Endothelial cell of umbilical vein (primary cell): ENCODE measurements at regions of chr7 and their contacts with region 1.

Region 1: GRCh38 chr7:135274495-135275268 is 41.0 kb downstream of the STRA8 start:
- DNase-seq: peak; percentile 81
- H3K4me3 ChIP-seq: no peak overlapping the region
- H3K27ac ChIP-seq: no peak overlapping the region
- H3K4me1 ChIP-seq: no peaks in the 10 kb centered on the region
- H3K27me3 ChIP-seq: peaks cover 0 to 2% of the 10 kb centered on the region in 2 experiments
- CTCF ChIP-seq: peak; percentile 69 to 73
- POLR2A ChIP-seq: no peak

Region 2: DNA sequence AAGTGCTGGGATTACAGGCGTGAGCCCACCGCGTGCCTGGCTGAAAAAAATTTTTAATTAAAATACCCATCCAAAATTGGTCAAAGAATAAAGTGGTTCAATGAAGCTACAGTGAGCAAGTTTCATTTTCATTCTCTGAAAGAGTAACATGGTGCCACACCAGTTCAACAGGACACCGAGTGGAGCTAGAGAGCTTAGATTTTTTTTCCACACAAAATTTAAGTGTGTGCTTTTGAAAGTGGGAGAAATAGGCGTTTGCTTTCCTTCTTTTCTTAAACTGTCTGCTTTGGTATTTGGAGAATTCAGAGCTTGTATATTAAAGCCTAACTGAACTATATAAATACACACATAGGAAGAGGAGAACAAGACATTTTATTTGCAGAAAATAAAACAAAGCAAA is 584.7 kb before region 1 on chr7:
- CTCF ChIA-PET with region 1: interaction called, 14 read pairs
- POLR2A ChIA-PET with region 1: no interaction called
- dilution Hi-C with region 1: no loop called
- intact Hi-C with region 1: no loop called
- DNase-seq: peak; percentile 56
- H3K4me3 ChIP-seq: no peak overlapping the region
- H3K27ac ChIP-seq: no peak overlapping the region
- H3K4me1 ChIP-seq: no peaks in the 10 kb centered on the region
- H3K27me3 ChIP-seq: peaks cover 0 to 3% of the 10 kb centered on the region in 2 experiments
- CTCF ChIP-seq: peak in 1 of 2 donors; percentile 39
- POLR2A ChIP-seq: no peak

Region 3: DNA sequence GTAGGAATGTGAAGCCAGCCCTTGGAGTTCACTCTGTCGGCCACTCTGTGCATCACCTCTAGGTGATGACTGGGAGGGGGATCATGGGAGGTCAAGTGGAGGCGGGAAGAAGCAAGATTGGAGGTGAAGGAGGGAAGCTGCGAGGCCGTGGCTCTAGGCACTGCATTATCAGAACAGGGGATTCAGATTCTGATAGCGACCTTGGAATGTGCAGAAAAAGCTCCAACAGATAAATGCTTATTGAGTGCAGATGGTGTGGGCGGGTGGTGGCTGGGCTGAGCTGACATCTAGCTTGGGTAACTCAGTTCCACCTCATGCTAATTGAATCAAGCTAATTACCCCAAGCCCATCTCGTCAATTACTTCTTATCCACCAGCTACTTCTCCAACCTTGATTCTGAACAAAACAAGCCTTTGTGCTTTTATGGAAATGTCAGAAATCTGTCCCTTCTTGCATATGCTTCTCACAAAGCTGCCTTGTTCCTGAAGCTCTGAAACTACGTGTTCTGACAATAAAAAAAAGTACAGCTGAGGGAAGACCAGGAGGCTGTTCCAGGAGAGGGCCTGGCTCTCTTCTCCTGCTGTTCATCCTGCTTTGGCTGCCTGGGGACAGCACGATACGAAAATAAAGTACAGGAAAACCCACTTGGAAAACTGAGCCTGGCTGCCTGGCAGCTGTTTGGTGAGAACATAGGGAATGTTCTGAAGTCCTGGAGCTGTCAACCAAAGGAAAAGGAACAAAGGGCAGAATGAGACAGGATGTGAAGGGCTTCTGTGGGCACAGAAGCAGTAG is 13.6 kb before region 1 on chr7:
- CTCF ChIA-PET with region 1: interaction called, 31 read pairs
- POLR2A ChIA-PET with region 1: no interaction called
- dilution Hi-C with region 1: no loop called
- intact Hi-C with region 1: no loop called
- DNase-seq: peak; percentile 36
- H3K4me3 ChIP-seq: no peak overlapping the region
- H3K27ac ChIP-seq: no peak overlapping the region
- H3K4me1 ChIP-seq: no peaks in the 10 kb centered on the region
- H3K27me3 ChIP-seq: peaks cover 0 to 1% of the 10 kb centered on the region in 2 experiments
- CTCF ChIP-seq: no peak
- POLR2A ChIP-seq: no peak

Region 4: DNA sequence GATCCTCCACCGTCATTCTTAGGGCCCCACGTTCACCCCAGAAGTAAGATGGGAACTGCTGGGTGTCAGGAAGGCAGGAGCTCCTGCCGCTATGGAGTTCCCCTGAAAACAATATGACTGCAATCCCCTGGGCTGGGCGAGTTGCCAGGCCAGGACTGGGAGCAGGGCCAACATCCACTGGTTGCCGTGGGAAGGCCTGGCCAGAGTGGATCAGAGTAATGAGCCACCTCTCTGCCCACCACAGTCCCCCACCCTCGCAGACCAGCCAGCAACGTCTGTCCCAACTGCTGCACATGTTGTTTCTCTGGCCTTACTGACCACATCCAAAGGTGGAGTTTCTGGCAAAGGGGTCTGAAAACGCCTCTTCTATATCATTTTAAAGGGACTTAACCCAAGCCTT is 45.6 kb after region 1 on chr7:
- CTCF ChIA-PET with region 1: interaction called, 10 read pairs
- POLR2A ChIA-PET with region 1: no interaction called
- dilution Hi-C with region 1: no loop called
- intact Hi-C with region 1: no loop called
- DNase-seq: peak; percentile 97
- H3K4me3 ChIP-seq: no peak overlapping the region
- H3K27ac ChIP-seq: peak overlapping the region; percentile 16
- H3K4me1 ChIP-seq: peaks cover 11% of the 10 kb centered on the region
- H3K27me3 ChIP-seq: no peaks in the 10 kb centered on the region
- CTCF ChIP-seq: no peak
- POLR2A ChIP-seq: no peak

Region 5: GRCh38 chr7:135645296-135645904 is 370.7 kb after region 1 on chr7:
- CTCF ChIA-PET with region 1: interaction called, 173 read pairs
- POLR2A ChIA-PET with region 1: no interaction called
- dilution Hi-C with region 1: no loop called
- intact Hi-C with region 1: no loop called
- DNase-seq: peak; percentile 60
- H3K4me3 ChIP-seq: no peak overlapping the region
- H3K27ac ChIP-seq: no peak overlapping the region
- H3K4me1 ChIP-seq: no peaks in the 10 kb centered on the region
- H3K27me3 ChIP-seq: no peaks in the 10 kb centered on the region
- CTCF ChIP-seq: peak; percentile 35 to 57
- POLR2A ChIP-seq: no peak

Region 6: DNA sequence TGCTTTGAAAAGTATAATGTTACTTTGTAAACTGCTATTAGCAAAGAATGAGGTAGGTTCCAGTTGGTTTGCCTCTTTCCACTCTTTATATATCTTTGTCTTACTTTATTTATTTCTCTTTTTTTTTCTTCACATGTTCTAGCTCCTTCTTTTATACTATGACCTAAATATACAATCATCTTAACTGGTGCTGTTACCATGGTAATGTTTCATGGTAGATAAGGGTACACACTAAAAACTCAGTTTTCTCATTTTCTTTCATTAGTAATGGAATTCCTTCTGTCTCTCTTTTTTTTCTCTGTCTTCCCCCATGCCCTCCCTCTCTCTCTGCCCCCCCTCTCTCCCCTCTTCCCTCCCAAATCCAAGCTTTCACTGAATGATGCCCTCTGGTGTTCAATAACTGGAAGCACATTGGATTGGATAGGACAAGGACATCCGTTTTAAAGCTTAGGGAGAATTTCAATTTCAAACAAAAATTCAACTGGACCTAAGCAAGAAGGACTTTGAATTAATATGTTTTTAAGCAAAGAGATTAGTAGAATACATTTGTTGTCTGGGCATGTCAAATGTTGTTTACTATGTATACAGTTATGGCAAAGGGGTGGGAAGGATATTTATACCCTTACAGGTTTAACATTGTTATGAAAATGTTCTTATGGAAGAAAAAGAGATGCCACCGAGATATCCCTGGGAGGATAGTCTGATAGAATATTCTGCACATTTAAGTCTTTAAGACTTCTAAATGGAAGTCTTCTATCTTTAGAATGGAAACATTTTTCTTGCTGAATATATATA is 1599.8 kb after region 1 on chr7:
- CTCF ChIA-PET with region 1: interaction called, 10 read pairs
- POLR2A ChIA-PET with region 1: no interaction called
- dilution Hi-C with region 1: no loop called
- intact Hi-C with region 1: no loop called
- DNase-seq: peak; percentile 28
- H3K4me3 ChIP-seq: no peak overlapping the region
- H3K27ac ChIP-seq: no peak overlapping the region
- H3K4me1 ChIP-seq: peaks cover 6% of the 10 kb centered on the region
- H3K27me3 ChIP-seq: peaks cover 39 to 56% of the 10 kb centered on the region in 2 experiments
- CTCF ChIP-seq: peak; percentile 28 to 53
- POLR2A ChIP-seq: no peak